PC-9 (cell line): ENCODE measurements at regions of chr3 and their contacts with region 1.

Region 1: DNA sequence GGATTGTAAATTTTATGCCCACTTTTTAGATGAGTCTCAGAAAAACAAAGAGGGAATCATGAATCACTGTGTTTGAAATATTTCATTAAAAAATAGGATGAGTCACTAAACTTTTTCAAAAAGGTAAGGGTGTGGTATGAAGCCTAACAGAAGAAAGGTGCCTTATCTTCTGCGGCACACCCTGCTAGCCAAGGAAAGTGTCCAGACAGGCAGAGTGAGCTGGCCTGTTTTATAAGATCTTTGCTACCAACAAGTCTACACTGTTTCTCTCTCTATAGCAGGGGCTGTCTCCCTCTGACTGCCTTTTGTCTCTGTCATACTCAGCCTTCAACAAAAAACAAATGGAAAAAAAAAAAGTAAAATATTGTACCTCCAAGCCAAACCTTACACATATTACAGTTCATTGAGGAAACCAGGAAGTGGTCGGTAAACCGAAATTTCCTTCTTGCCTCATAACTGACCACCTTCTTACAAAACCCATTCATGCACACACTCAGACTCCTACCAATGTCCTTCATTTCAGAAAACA is 9.2 kb downstream of the ZDHHC3 start:
- DNase-seq: peak; percentile 77 to 95
- H3K4me3 ChIP-seq: peak overlapping the region; percentile 14; the same call in 1 of the 2 replicates
- H3K27ac ChIP-seq: peak overlapping the region; percentile 91
- H3K4me1 ChIP-seq: peaks cover 98% of the 10 kb centered on the region
- H3K27me3 ChIP-seq: no peaks in the 10 kb centered on the region
- CTCF ChIP-seq: no peak

Region 2: GRCh38 chr3:44338010-44338827 is 628.6 kb before region 1 on chr3 and contains the start of gene TCAIM:
- CTCF ChIA-PET with region 1: no interaction called
- POLR2A ChIA-PET with region 1: interaction called, 14 read pairs
- intact Hi-C with region 1: no loop called
- DNase-seq: peak; percentile 88 to 98
- H3K4me3 ChIP-seq: peak within 1 kb of the TSS; percentile 69
- H3K27ac ChIP-seq: peak within 1 kb of the TSS; percentile 63
- H3K4me1 ChIP-seq: peaks cover 19% of the 10 kb centered on the region
- H3K27me3 ChIP-seq: no peaks in the 10 kb centered on the region
- CTCF ChIP-seq: no peak
- total RNA-seq, gene TCAIM: 22.8 and 28.3 TPM in 2 replicates

Region 3: GRCh38 chr3:44883999-44884431 is 82.8 kb before region 1 on chr3:
- CTCF ChIA-PET with region 1: no interaction called
- POLR2A ChIA-PET with region 1: interaction called, 14 read pairs
- intact Hi-C with region 1: loop called (anchors 5 kb)
- DNase-seq: peak; percentile 68 to 91
- H3K4me3 ChIP-seq: no peak overlapping the region
- H3K27ac ChIP-seq: peak overlapping the region; percentile 77
- H3K4me1 ChIP-seq: peaks cover 43% of the 10 kb centered on the region
- H3K27me3 ChIP-seq: no peaks in the 10 kb centered on the region
- CTCF ChIP-seq: no peak